CD8-positive, alpha-beta T cell (primary cell): ENCODE measurements at regions of chr14 and their contacts with region 1.

Region 1: DNA sequence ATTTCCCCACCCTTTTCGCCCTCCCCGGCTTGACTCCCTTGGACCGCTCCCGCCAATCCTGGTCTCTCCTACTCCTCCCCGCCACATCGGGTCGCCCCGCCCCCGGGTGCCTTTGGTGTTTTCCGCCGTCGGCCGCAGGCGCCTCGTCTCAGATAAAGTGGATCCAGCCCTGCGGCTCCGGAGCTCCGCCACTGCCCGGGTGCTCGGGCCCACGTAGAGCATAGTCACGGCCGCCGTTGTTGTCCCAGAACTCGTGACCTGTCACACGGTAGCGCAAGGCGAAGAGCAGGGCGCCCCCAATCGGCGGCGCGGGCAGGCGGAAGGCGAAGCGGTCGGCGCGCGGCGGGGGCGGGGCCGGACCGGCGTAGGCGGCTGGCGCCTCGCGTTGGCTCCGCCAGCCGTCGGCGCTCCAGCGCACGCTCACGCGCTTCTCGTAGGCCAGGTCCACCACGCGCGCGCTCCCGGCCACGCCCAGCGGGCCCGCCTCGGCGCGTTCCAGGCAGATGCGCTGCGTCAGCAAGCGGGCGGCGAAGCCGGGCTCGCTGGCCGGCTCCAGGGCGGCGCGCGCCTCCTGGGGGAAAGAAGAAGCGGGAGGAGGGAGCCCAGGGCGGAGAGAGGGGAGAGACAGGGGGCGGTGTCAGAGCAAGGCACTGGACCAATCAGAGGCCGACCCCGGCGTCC is 1.2 kb downstream of the PPP1R3E start:
- DNase-seq: peak; percentile 93 to 99 (median 97)
- ATAC-seq: peak; percentile 74
- H3K4me3 ChIP-seq: peak overlapping the region; percentile 77 to 97
- H3K4me3 Mint-ChIP-seq: peak overlapping the region; percentile 97
- H3K27ac ChIP-seq: peak overlapping the region; percentile 97
- H3K27ac Mint-ChIP-seq: peak overlapping the region; percentile 98
- H3K4me1 ChIP-seq: peaks cover 19% of the 10 kb centered on the region
- H3K4me1 Mint-ChIP-seq: peaks cover 27% of the 10 kb centered on the region
- H3K27me3 ChIP-seq: no peaks in the 10 kb centered on the region
- H3K27me3 Mint-ChIP-seq: peaks cover 14% of the 10 kb centered on the region
- CTCF ChIP-seq: peak; percentile 68

Region 2: DNA sequence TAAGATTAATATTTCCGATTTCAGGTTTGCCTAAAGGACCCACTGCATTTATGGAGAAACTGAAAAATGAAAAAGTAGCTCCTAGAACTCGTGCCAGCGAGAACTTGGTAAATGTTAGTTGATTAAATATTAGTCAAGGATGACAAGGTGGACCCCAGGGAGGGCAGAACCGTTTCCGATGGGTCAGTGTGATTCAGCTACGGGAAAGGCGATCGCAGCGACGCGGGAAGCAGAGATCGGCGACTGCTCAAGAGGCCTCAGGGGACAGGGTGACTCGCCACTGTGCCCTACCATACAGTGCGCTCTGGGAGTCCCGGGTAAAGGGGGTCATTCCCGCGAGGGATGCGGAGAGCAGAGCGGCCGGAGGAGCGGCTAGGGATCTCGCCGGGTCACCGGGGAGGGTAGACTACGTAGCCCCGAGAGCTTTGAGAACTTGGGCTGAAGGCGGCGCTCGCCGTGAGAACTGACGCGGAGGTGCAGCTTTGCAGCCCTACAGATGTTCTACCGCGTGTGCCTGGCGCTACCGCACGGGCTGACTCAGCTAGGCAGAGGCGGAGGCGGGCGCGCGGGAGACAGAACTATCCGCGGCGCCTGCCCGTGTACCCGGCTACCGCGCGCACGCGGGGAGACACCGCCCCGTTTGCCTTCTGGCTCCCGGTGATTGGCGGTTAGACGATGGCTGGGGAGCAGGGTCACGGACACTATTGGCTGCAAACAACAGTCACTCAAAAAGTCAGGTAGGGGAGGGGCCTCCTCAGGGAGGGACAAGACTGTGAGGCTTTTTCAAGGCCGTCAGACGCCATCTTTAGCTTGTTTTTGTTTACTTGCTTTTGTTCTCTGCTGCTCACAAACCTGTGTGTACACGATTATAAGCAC is 294.6 kb before region 1 on chr14:
- CTCF ChIA-PET with region 1: no interaction called
- POLR2A ChIA-PET with region 1: no interaction called
- intact Hi-C with region 1: loop called in 1 of 2 experiments (anchors 10 kb)
- DNase-seq: peak; percentile 93 to 99 (median 96)
- ATAC-seq: peak; percentile 92
- H3K4me3 ChIP-seq: peak overlapping the region; percentile 84 to 87
- H3K4me3 Mint-ChIP-seq: peak overlapping the region; percentile 90
- H3K27ac ChIP-seq: peak overlapping the region; percentile 80 to 84
- H3K27ac Mint-ChIP-seq: peak overlapping the region; percentile 98
- H3K4me1 ChIP-seq: peaks cover 20% of the 10 kb centered on the region
- H3K4me1 Mint-ChIP-seq: peaks cover 41% of the 10 kb centered on the region
- H3K27me3 ChIP-seq: no peaks in the 10 kb centered on the region
- H3K27me3 Mint-ChIP-seq: no peaks in the 10 kb centered on the region
- CTCF ChIP-seq: no peak

Region 3: GRCh38 chr14:23095196-23096108 is 206.0 kb before region 1 on chr14 and contains the start of gene C14orf119:
- CTCF ChIA-PET with region 1: interaction called, 3 read pairs
- POLR2A ChIA-PET with region 1: interaction called, 13 read pairs
- intact Hi-C with region 1: loop called (anchors 1 kb)
- DNase-seq: peak in 8 of 9 experiments; percentile 98 to 100 (median 100)
- ATAC-seq: peak; percentile 86
- H3K4me3 ChIP-seq: peak within 1 kb of the TSS; percentile 81 to 93
- H3K4me3 Mint-ChIP-seq: no peak within 1 kb of the TSS
- H3K27ac ChIP-seq: peak within 1 kb of the TSS; percentile 93 to 98
- H3K27ac Mint-ChIP-seq: no peak within 1 kb of the TSS
- H3K4me1 ChIP-seq: peaks cover 39% of the 10 kb centered on the region
- H3K4me1 Mint-ChIP-seq: peaks cover 51% of the 10 kb centered on the region
- H3K27me3 ChIP-seq: no peaks in the 10 kb centered on the region
- H3K27me3 Mint-ChIP-seq: no peaks in the 10 kb centered on the region
- CTCF ChIP-seq: no peak
- total RNA-seq, gene C14orf119: 3.5 to 3.8 TPM

Region 4: DNA sequence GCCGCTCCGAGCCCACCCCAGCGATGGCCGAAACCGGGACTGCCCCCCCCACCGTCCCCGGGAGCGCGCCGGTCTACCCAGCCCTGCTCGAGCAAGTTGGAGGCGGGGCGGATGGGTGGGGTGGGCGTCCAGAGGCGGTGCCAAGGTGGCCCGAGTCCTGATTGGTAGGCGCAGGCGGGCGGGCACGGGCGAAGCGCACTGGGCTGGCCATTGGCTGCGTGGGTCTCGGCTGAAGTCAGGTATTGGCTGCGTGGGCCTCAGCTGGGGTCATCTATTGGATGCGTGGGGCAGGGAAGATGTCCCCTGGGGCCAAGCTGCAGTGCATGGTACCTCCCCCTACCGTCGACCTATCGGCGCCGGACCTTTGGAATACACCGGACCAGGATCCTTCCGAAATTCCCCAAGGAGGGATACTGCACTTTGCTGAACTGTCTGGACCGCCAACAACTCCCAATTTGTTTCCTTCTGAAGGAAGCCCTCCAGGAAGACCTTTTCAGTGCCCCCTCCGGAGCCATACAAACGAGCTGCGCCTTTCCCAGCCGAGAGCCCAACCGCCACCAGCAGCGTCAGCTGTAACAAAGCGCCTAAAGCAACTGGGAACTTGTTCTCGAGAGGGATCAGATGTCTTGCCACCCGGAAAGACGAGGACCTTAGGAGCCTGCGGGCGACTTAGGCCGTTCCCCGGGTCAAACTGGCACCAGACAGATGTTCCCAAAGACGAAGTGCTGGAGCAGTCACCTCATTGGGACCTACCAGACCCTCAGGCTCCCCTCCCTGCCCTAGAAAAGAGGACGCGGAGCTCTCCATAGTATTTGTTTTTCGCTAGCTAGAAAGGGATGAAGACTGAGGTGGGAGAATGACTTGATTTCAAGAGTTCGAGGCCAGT is 15.2 kb before region 1 on chr14 and contains the start of gene HOMEZ:
- CTCF ChIA-PET with region 1: interaction called, 11 read pairs
- POLR2A ChIA-PET with region 1: interaction called, 20 read pairs
- intact Hi-C with region 1: loop called (anchors 1 kb)
- DNase-seq: peak; percentile 94 to 98 (median 97)
- ATAC-seq: peak; percentile 96
- H3K4me3 ChIP-seq: peak within 1 kb of the TSS; percentile 89 to 94
- H3K4me3 Mint-ChIP-seq: peak within 1 kb of the TSS; percentile 99
- H3K27ac ChIP-seq: peak within 1 kb of the TSS; percentile 67 to 83
- H3K27ac Mint-ChIP-seq: peak within 1 kb of the TSS; percentile 96
- H3K4me1 ChIP-seq: peaks cover 20% of the 10 kb centered on the region
- H3K4me1 Mint-ChIP-seq: peaks cover 36% of the 10 kb centered on the region
- H3K27me3 ChIP-seq: no peaks in the 10 kb centered on the region
- H3K27me3 Mint-ChIP-seq: no peaks in the 10 kb centered on the region
- CTCF ChIP-seq: no peak
- total RNA-seq, gene HOMEZ: 3.1 to 4.0 TPM

Region 5: GRCh38 chr14:23352511-23353432 is 51.3 kb after region 1 on chr14 and contains the start of gene SLC22A17:
- CTCF ChIA-PET with region 1: no interaction called
- POLR2A ChIA-PET with region 1: interaction called, 4 read pairs
- intact Hi-C with region 1: loop called in 1 of 2 experiments (anchors 1 kb)
- DNase-seq: peak; percentile 28 to 80 (median 70)
- ATAC-seq: peak; percentile 95
- H3K4me3 ChIP-seq: peak within 1 kb of the TSS; percentile 44 to 55
- H3K4me3 Mint-ChIP-seq: peak within 1 kb of the TSS; percentile 77
- H3K27ac ChIP-seq: peak within 1 kb of the TSS in 1 of 2 experiments; percentile 3
- H3K27ac Mint-ChIP-seq: peak within 1 kb of the TSS; percentile 34
- H3K4me1 ChIP-seq: peaks cover 8% of the 10 kb centered on the region
- H3K4me1 Mint-ChIP-seq: peaks cover 10% of the 10 kb centered on the region
- H3K27me3 ChIP-seq: peaks cover 0 to 2% of the 10 kb centered on the region in 2 experiments
- H3K27me3 Mint-ChIP-seq: peaks cover 37% of the 10 kb centered on the region
- CTCF ChIP-seq: no peak
- total RNA-seq, gene SLC22A17: 12.3 to 13.5 TPM

Region 6: DNA sequence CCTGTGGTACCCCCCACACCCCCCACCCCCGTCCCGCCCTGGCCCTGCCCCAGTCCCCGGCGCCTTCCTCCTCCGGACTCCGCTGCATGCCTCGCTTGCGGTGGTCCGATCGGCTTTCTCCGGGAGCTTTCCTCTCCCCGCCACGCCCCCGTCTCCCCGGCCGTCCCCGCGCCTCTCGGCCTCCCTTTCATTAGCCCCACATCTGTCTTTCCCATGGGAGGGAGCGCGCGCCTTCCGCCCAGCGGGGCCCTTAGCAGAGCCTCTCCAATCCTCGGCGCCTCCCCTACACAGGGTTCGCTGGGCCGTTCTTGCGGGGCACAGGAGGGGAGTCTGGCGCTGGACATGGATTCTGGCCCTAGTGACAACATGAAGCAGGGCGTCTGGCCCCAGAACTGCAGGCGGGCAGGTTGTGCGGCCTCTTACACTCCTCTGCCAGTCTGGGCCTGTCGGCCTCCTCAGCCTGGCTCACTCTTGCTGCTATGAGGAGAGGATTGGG is 65.0 kb after region 1 on chr14:
- CTCF ChIA-PET with region 1: no interaction called
- POLR2A ChIA-PET with region 1: no interaction called
- intact Hi-C with region 1: no loop called
- DNase-seq: no peak
- ATAC-seq: no peak
- H3K4me3 ChIP-seq: no peak overlapping the region
- H3K4me3 Mint-ChIP-seq: no peak overlapping the region
- H3K27ac ChIP-seq: no peak overlapping the region
- H3K27ac Mint-ChIP-seq: no peak overlapping the region
- H3K4me1 ChIP-seq: no peaks in the 10 kb centered on the region
- H3K4me1 Mint-ChIP-seq: peaks cover 3% of the 10 kb centered on the region
- H3K27me3 ChIP-seq: peaks cover 11 to 14% of the 10 kb centered on the region in 2 experiments
- H3K27me3 Mint-ChIP-seq: peaks cover 30% of the 10 kb centered on the region
- CTCF ChIP-seq: no peak